ENCODE measurements at regions of chr1 and their contacts with region 1.

Region 1: DNA sequence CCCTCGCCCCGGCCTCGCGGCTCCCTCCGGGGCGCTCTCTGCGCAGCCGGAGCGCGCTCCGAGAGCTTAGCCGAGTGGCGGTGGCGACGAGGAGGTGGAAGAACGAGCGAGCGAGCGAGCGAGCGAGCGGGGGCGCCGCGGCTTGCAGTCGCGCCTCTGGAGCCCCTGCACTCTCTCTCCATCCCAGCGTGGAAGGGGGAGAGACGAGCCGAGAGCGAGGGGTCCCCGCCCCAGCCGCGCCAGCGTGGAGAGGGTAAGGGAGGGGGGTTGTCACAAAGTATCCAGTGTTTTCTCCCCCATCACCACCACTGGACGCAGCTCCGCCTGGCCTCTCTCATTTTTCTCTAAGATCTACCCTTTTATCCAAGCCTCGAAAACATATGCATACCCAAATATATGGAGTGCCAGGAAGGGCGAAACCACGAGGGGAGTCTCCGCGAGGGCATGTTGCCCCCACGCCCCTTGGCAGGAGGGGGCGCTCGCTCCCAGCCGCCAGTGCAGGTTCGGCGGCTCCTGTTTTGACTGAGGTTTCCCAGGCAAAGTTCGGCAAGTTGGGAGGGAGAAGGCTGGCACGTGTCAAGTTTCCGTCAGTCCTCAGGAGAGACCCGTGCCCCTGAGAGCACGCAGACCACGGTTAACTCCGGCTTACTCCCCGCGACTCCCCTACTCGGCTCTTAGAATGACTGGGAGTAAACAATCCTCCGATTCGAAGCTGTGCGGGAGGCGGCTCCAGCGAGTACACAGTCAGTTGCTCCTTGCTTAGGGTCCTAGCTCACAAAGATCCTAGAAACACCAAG is 569 bp upstream of the DAB1 start:
- DNase-seq: peak; percentile 28 to 73 (median 50)
- ATAC-seq: peak; percentile 33 to 78 (median 72)
- H3K4me3 ChIP-seq: peak overlapping the region; percentile 26 to 60 (median 53)
- H3K27ac ChIP-seq: peak overlapping the region in 7 of 12 donors; percentile 11 to 57 (median 45)
- H3K4me1 ChIP-seq: peaks cover 0 to 28% (median 1%) of the 10 kb centered on the region in 12 donors
- H3K27me3 ChIP-seq: peaks cover 0 to 57% (median 14%) of the 10 kb centered on the region in 9 donors
- CTCF ChIP-seq: peak; percentile 37 to 79 (median 64)
- POLR2A ChIP-seq: no peak

Region 2: GRCh38 chr1:57131701-57132394 is 292.6 kb before region 1 on chr1:
- intact Hi-C with region 1: loop called in 1 of 10 experiments (anchors 5 kb)
- DNase-seq: no peak
- ATAC-seq: peak; percentile 86 to 94 (median 92)
- H3K4me3 ChIP-seq: no peak overlapping the region
- H3K27ac ChIP-seq: peak overlapping the region in 6 of 12 donors; percentile 12 to 69 (median 38)
- H3K4me1 ChIP-seq: peaks cover 0 to 25% (median 0%) of the 10 kb centered on the region in 12 donors
- H3K27me3 ChIP-seq: no peaks in the 10 kb centered on the region
- CTCF ChIP-seq: no peak
- POLR2A ChIP-seq: no peak

Region 3: DNA sequence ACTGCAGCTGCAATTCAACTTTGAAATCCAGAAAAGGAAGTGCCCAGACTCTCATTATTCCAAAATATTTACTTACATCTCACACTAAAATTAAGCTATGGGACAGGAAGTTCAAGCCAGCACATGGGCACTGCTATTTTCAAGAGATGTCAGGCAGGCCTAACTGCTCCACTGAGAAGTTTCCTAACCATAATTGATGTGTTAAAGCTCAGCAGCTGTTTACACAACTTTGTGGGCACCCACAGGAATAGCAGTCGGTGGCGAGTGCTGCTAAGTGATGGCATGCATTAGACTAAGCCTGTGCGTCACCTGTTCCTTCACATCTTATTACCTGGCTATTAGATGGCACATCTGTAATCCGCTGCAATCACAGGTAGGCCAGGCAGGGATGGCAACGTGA is 302.7 kb after region 1 on chr1:
- intact Hi-C with region 1: loop called in 1 of 10 experiments (anchors 10 kb)
- DNase-seq: no peak
- ATAC-seq: no peak
- H3K4me3 ChIP-seq: no peak overlapping the region
- H3K27ac ChIP-seq: no peak overlapping the region
- H3K4me1 ChIP-seq: peaks cover 0 to 11% (median 0%) of the 10 kb centered on the region in 12 donors
- H3K27me3 ChIP-seq: no peaks in the 10 kb centered on the region
- CTCF ChIP-seq: no peak
- POLR2A ChIP-seq: no peak

Region 4: GRCh38 chr1:58155418-58156123 is 731.1 kb after region 1 on chr1:
- intact Hi-C with region 1: loop called in 5 of 10 experiments (anchors 5 to 10 kb)
- DNase-seq: peak in 4 of 5 donors; percentile 30 to 68 (median 58)
- ATAC-seq: peak; percentile 90 to 96 (median 94)
- H3K4me3 ChIP-seq: no peak overlapping the region
- H3K27ac ChIP-seq: peak overlapping the region in 6 of 12 donors; percentile 33 to 48 (median 42)
- H3K4me1 ChIP-seq: peaks cover 0 to 24% (median 1%) of the 10 kb centered on the region in 12 donors
- H3K27me3 ChIP-seq: no peaks in the 10 kb centered on the region
- CTCF ChIP-seq: peak; percentile 42 to 68 (median 56)
- POLR2A ChIP-seq: no peak

Region 5: GRCh38 chr1:58546520-58547308 is 1122.3 kb after region 1 on chr1 and contains the start of gene OMA1:
- intact Hi-C with region 1: loop called in 2 of 10 experiments (anchors 10 kb)
- DNase-seq: peak; percentile 97 to 99 (median 99)
- ATAC-seq: peak; percentile 99
- H3K4me3 ChIP-seq: peak within 1 kb of the TSS; percentile 60 to 97 (median 83)
- H3K27ac ChIP-seq: peak within 1 kb of the TSS; percentile 96 to 100 (median 99)
- H3K4me1 ChIP-seq: peaks cover 0 to 17% (median 11%) of the 10 kb centered on the region in 12 donors
- H3K27me3 ChIP-seq: no peaks in the 10 kb centered on the region
- CTCF ChIP-seq: peak; percentile 94 to 99 (median 97)
- POLR2A ChIP-seq: peak in 1 of 2 donors; percentile 83
- total RNA-seq, gene OMA1: 23.5 to 44.5 (median 37.2) TPM

Measured in heart left ventricle (tissue), 16 donors.